CD4-positive, alpha-beta memory T cell (primary cell): ENCODE measurements at regions of chr3 and their contacts with region 1.

Region 1: GRCh38 chr3:49539659-49540560 is 14.4 kb upstream of the BSN start:
- DNase-seq: peak; percentile 85 to 90 (median 86)
- H3K4me3 ChIP-seq: peak overlapping the region; percentile 61 to 64
- H3K4me3 Mint-ChIP-seq: peak overlapping the region; percentile 71 to 87 (median 82)
- H3K27ac ChIP-seq: peak overlapping the region; percentile 64
- H3K27ac Mint-ChIP-seq: peak overlapping the region in 6 of 7 donors; percentile 48 to 83 (median 56)
- H3K4me1 ChIP-seq: peaks cover 11% of the 10 kb centered on the region
- H3K4me1 Mint-ChIP-seq: peaks cover 2 to 8% (median 4%) of the 10 kb centered on the region in 4 donors
- H3K27me3 ChIP-seq: no peaks in the 10 kb centered on the region
- H3K27me3 Mint-ChIP-seq: peaks cover 4 to 5% of the 10 kb centered on the region in 2 donors

Region 2: DNA sequence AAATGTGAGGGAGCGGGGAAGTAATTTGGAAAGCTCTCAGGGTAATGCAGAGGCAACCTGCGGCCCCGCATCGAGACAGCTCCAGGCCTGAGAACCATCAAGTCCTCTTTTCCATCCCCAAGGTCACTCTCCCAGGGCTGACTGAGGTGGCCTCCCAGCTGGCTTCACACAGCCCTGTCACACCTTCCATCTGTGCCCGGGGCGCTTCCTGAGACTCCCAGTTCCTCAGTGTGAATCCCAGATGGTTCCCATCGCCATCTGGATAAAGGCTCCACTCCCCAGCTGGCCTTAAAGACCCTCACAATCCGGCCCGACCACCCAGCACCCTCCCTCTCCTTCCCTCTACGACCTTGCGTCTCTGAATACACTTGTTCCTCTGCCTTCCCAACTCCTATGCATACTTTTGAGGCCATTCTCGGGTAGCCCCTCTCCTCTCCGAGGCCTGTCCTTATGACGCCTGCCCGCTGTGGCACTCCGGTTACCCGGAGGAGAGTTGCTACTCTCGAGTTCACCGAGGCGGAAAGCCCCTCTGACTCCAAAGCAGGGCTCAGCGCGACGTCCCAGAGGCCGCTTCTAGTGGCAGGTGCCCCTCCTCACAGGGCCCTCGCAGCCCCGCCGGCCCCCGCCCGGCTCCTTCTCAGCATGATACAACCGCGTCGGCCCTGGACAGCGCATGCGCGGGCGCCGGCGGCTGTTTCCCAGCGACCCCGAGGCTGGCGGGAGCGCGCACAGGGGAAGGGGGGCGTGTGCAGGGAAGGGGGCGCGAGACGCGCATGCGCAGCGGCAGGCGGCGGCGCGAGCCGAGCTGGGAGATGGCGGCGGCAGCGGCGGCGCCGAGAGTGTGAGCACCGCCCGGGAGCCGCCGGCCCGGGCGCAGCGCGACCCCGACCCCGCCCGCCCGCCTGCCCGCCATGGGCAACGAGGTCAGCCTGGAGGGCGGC is 14.1 kb after region 1 on chr3 and contains the start of gene BSN:
- CTCF ChIA-PET with region 1: interaction called, 31 read pairs
- POLR2A ChIA-PET with region 1: interaction called, 13 read pairs
- intact Hi-C with region 1: no loop called
- DNase-seq: peak; percentile 80 to 85 (median 82)
- H3K4me3 ChIP-seq: peak within 1 kb of the TSS in 1 of 2 donors; percentile 63
- H3K4me3 Mint-ChIP-seq: peak within 1 kb of the TSS; percentile 80 to 90 (median 83)
- H3K27ac ChIP-seq: no peak within 1 kb of the TSS
- H3K27ac Mint-ChIP-seq: peak within 1 kb of the TSS; percentile 6 to 88 (median 24)
- H3K4me1 ChIP-seq: peaks cover 26% of the 10 kb centered on the region
- H3K4me1 Mint-ChIP-seq: peaks cover 8 to 28% (median 17%) of the 10 kb centered on the region in 4 donors
- H3K27me3 ChIP-seq: peaks cover 11% of the 10 kb centered on the region
- H3K27me3 Mint-ChIP-seq: peaks cover 29 to 51% of the 10 kb centered on the region in 2 donors
- total RNA-seq, gene BSN: 0.06 to 0.15 TPM

Region 3: DNA sequence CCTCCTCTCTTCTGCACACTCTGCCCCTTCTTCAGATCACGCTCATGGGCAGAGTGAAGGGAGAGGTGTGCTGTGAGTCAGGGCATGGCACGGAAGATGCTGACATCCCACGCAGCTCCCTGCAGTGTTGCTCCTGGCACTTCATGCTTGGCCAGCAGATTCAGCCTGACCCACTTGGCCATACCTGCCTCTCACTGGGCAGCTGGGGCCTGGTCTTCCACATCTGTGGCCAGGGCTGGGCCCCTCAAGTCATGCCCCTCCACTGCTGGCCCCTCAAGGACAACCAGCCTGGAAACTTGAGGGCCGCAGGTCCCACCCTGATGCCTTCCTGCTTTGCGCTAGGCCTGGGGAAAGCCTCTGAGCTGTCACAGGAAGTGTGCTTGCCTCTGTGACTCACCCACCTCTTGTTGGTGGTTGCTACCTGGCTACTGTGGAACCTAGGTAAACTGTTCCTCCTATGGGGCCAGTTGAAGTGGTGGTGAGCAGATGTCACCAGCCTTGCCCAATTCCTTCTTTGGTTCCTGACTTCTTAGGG is 63.0 kb after region 1 on chr3:
- CTCF ChIA-PET with region 1: interaction called, 8 read pairs
- POLR2A ChIA-PET with region 1: interaction called, 12 read pairs
- intact Hi-C with region 1: no loop called
- DNase-seq: peak; percentile 43 to 78 (median 53)
- H3K4me3 ChIP-seq: no peak overlapping the region
- H3K4me3 Mint-ChIP-seq: peak overlapping the region in 5 of 8 donors; percentile 1 to 66 (median 54)
- H3K27ac ChIP-seq: peak overlapping the region; percentile 38
- H3K27ac Mint-ChIP-seq: peak overlapping the region; percentile 73 to 94 (median 90)
- H3K4me1 ChIP-seq: peaks cover 18% of the 10 kb centered on the region
- H3K4me1 Mint-ChIP-seq: peaks cover 14 to 27% (median 19%) of the 10 kb centered on the region in 4 donors
- H3K27me3 ChIP-seq: no peaks in the 10 kb centered on the region
- H3K27me3 Mint-ChIP-seq: no peaks in the 10 kb centered on the region

Region 4: GRCh38 chr3:49668414-49668797 is 128.5 kb after region 1 on chr3:
- CTCF ChIA-PET with region 1: interaction called, 319 read pairs
- POLR2A ChIA-PET with region 1: interaction called, 85 read pairs
- intact Hi-C with region 1: no loop called
- DNase-seq: no peak
- H3K4me3 ChIP-seq: no peak overlapping the region
- H3K4me3 Mint-ChIP-seq: no peak overlapping the region
- H3K27ac ChIP-seq: no peak overlapping the region
- H3K27ac Mint-ChIP-seq: no peak overlapping the region
- H3K4me1 ChIP-seq: peaks cover 9% of the 10 kb centered on the region
- H3K4me1 Mint-ChIP-seq: peaks cover 7 to 13% (median 9%) of the 10 kb centered on the region in 4 donors
- H3K27me3 ChIP-seq: no peaks in the 10 kb centered on the region
- H3K27me3 Mint-ChIP-seq: no peaks in the 10 kb centered on the region

Region 5: GRCh38 chr3:49723628-49724551 is 184.0 kb after region 1 on chr3 and contains the start of gene GMPPB:
- CTCF ChIA-PET with region 1: interaction called, 12 read pairs
- POLR2A ChIA-PET with region 1: interaction called, 6 read pairs
- intact Hi-C with region 1: no loop called
- DNase-seq: peak; percentile 88 to 92 (median 92)
- H3K4me3 ChIP-seq: peak within 1 kb of the TSS; percentile 85 to 89
- H3K4me3 Mint-ChIP-seq: peak within 1 kb of the TSS; percentile 93 to 98 (median 96)
- H3K27ac ChIP-seq: peak within 1 kb of the TSS; percentile 99
- H3K27ac Mint-ChIP-seq: peak within 1 kb of the TSS; percentile 98 to 99 (median 99)
- H3K4me1 ChIP-seq: peaks cover 26% of the 10 kb centered on the region
- H3K4me1 Mint-ChIP-seq: peaks cover 13 to 48% (median 24%) of the 10 kb centered on the region in 4 donors
- H3K27me3 ChIP-seq: no peaks in the 10 kb centered on the region
- H3K27me3 Mint-ChIP-seq: peaks cover 0 to 2% of the 10 kb centered on the region in 2 donors
- total RNA-seq, gene GMPPB: 59.5 to 61.3 TPM

Region 6: GRCh38 chr3:49763981-49764380 is 224.1 kb after region 1 on chr3:
- CTCF ChIA-PET with region 1: no interaction called
- POLR2A ChIA-PET with region 1: no interaction called
- intact Hi-C with region 1: no loop called
- DNase-seq: no peak
- H3K4me3 ChIP-seq: no peak overlapping the region
- H3K4me3 Mint-ChIP-seq: no peak overlapping the region
- H3K27ac ChIP-seq: no peak overlapping the region
- H3K27ac Mint-ChIP-seq: no peak overlapping the region
- H3K4me1 ChIP-seq: no peaks in the 10 kb centered on the region
- H3K4me1 Mint-ChIP-seq: peaks cover 8 to 26% (median 12%) of the 10 kb centered on the region in 4 donors
- H3K27me3 ChIP-seq: no peaks in the 10 kb centered on the region
- H3K27me3 Mint-ChIP-seq: no peaks in the 10 kb centered on the region